ENCODE measurements at regions of chr1 and their contacts with region 1.

Region 1: DNA sequence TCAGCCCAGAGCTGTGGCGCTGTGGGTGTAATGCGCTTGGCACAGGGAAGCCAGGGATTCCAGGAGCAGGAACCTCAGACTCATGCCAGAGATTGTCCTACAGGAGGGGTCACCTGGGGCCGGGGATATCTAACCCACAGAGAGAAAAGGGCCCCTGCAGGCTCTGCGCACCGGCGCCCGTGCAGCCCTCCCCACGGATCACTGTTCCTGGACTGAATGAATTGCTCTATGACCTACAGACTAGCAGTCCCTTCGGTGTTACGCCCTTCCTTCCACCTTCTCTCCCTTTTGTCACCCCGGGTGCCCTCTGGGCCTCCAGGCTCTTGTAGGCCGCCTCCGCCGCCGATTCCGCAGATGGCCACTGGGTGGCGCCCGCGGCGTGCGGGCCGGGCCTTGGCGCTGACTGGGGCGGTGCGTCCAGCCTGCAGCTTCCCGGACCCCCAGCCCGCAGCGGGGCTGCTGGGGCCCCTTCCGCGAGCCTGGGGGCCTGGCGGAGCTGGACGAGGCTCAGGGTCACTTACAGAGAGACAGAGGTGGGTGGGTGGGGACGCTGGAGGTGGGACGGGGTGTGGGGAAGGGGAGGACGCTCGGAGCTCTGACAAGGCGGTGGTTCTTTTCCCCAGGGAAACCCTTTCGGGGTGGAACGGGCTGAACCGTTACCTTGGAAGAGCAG is 101.3 kb downstream of the IER5 start:
- DNase-seq: peak; percentile 47 to 85 (median 85)
- ATAC-seq: peak; percentile 81 to 89
- H3K4me3 ChIP-seq: peak overlapping the region; percentile 21
- H3K27ac ChIP-seq: no peak overlapping the region
- H3K4me1 ChIP-seq: no peaks in the 10 kb centered on the region
- H3K27me3 ChIP-seq: no peaks in the 10 kb centered on the region

Region 2: DNA sequence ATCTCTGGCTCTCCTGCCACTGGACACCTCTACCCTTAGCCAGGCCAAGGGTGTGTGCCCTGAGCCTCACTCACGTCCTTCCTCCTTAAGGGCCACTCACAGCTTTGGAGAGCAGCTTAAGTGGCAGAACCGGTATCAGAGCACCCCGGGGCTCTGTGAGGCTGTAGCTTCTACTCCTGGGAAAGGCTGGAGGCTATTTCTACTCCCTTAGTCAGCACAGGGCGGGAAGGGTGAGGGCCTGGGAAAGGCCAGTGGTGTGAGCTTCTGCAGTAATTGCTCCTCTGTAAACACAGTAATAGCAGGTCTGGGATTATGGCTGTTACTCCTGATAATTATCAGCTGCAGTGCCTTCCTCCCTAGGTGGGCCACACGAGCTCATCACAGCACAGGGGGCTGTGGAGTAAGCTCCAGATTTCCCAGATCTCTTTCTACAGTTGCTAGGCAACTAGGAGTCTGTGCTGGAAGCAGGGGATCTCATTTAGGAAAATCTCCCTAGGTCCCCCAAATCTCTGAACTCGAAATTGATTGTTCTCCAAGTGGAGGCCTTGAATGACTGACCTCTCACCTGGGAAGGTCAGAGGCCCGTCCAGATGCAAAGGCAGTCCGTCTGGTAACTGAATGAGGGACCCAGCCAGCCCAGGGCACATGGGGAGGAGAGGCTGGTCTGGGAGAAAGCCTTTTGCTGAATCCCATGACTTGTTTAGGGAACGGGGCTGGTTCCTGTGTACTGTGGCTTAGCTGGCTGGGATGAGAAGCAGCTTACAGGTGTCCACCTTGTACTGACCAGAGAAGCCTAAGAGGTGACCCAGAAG is 72.0 kb before region 1 on chr1:
- intact Hi-C with region 1: no loop called
- DNase-seq: peak in 1 of 3 donors; percentile 41
- ATAC-seq: peak; percentile 17 to 34
- H3K4me3 ChIP-seq: no peak overlapping the region
- H3K27ac ChIP-seq: no peak overlapping the region
- H3K4me1 ChIP-seq: peaks cover 5% of the 10 kb centered on the region
- H3K27me3 ChIP-seq: no peaks in the 10 kb centered on the region

Region 3: DNA sequence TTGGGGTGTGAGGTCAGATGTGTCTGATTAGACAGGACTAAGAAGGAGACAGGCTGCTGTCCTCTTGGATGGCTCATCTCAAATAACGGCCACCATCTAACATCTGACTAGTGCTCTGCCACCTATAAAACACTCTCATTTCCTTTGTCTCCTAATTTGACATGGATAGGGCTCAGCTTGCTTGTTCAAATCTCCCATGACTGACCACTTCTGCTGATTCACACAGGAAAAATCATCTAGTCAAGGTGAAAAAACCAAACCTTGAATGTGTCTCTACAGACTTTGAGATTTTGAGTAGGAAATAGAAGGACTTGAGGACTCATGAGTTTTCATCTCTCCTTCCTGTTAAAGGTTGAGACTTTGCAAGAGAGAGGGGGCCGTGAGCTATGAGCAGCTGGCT is 49.3 kb after region 1 on chr1:
- intact Hi-C with region 1: no loop called
- DNase-seq: no peak
- ATAC-seq: no peak
- H3K4me3 ChIP-seq: no peak overlapping the region
- H3K27ac ChIP-seq: no peak overlapping the region
- H3K4me1 ChIP-seq: no peaks in the 10 kb centered on the region
- H3K27me3 ChIP-seq: no peaks in the 10 kb centered on the region

Region 4: GRCh38 chr1:181417915-181418314 is 228.1 kb after region 1 on chr1:
- intact Hi-C with region 1: loop called in 2 of 4 experiments (anchors 2 to 5 kb)
- DNase-seq: no peak
- ATAC-seq: no peak
- H3K4me3 ChIP-seq: no peak overlapping the region
- H3K27ac ChIP-seq: no peak overlapping the region
- H3K4me1 ChIP-seq: no peaks in the 10 kb centered on the region
- H3K27me3 ChIP-seq: no peaks in the 10 kb centered on the region

Region 5: DNA sequence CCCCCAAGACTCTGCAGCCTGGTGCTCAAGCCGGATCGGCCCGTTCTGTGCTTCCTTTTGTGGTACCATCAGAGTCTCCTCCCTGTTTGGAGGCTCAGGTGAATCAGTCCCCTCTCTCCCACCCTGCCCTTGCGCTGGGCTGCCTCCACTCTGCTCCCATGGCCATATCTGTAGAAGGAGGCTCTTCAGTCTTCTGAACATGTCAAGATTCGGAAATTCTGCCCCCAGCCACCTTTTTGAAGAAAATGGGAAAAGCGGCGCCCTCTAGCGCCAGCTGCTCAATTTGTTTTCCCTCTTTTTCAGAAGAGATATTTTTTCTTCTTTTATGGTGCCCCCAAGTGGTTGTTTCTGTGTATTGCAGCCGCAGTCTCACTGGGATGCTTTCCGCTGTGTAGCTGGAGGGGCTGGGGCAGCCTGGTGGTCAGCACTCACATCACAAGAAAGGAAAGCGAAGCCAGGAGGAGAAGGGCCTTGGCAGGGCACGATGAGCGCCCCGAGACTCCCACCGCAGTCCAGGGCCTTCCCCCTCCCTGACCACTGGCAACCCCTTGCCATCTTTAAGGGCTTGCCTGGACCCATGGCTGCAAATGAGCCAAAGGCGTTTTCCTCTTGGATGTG is 235.1 kb after region 1 on chr1:
- intact Hi-C with region 1: loop called in 3 of 4 experiments (anchors 1 to 5 kb)
- DNase-seq: peak; percentile 59 to 86 (median 74)
- ATAC-seq: peak; percentile 29 to 52
- H3K4me3 ChIP-seq: no peak overlapping the region
- H3K27ac ChIP-seq: no peak overlapping the region
- H3K4me1 ChIP-seq: no peaks in the 10 kb centered on the region
- H3K27me3 ChIP-seq: no peaks in the 10 kb centered on the region